ENCODE measurements at regions of chr19 and their contacts with region 1.

Region 1: DNA sequence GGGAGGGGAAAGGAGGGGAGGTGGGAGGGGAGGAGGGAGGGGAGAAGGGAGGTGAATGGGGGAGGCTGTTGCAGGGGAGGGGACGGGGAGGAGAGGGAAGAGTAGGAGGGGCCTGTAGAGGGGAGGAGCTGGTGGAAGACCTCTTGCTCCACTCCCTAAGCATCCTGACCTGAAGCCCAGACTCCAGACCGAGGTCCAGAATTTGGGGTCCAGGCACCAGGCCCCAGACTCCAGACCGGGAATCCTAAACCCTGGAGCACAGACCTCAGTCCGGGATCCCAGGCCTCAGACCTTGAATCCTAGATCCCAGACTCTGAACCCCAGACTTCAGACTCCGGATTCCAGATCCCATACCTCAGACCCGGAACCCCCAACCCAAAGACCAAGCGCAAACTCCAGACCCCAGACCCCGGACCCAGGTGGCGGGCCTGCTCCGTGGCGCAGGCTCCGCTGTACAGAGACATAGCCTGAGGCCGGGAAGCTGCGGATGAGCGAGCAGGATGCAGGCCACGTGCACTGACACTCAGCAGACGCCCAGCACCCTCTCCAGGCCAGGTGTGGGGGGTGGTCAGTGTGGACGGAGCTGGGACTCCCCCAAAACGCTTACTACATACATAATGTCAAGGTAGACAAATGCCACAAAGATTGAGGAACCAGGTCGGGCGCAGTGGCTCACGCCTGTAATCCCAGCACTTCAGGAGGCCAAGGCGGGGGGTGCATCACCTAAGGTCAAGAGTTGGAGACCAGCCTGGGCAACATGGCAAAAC is 710 bp upstream of the BTBD2 start:
- DNase-seq: peak in 8 of 9 experiments; percentile 24 to 82 (median 57)
- ATAC-seq: peak; percentile 50
- H3K4me3 ChIP-seq: no peak overlapping the region
- H3K4me3 Mint-ChIP-seq: peak overlapping the region; percentile 63
- H3K27ac ChIP-seq: no peak overlapping the region
- H3K27ac Mint-ChIP-seq: no peak overlapping the region
- H3K4me1 ChIP-seq: peaks cover 15% of the 10 kb centered on the region
- H3K4me1 Mint-ChIP-seq: peaks cover 27% of the 10 kb centered on the region
- H3K27me3 ChIP-seq: no peaks in the 10 kb centered on the region
- H3K27me3 Mint-ChIP-seq: no peaks in the 10 kb centered on the region
- CTCF ChIP-seq: no peak

Region 2: GRCh38 chr19:1929021-1929742 is 87.0 kb before region 1 on chr19:
- CTCF ChIA-PET with region 1: interaction called, 3 read pairs
- POLR2A ChIA-PET with region 1: no interaction called
- intact Hi-C with region 1: loop called (anchors 5 kb)
- DNase-seq: peak; percentile 66 to 93 (median 81)
- ATAC-seq: peak; percentile 82
- H3K4me3 ChIP-seq: peak overlapping the region; percentile 38 to 44
- H3K4me3 Mint-ChIP-seq: peak overlapping the region; percentile 80
- H3K27ac ChIP-seq: no peak overlapping the region
- H3K27ac Mint-ChIP-seq: no peak overlapping the region
- H3K4me1 ChIP-seq: peaks cover 21% of the 10 kb centered on the region
- H3K4me1 Mint-ChIP-seq: peaks cover 21% of the 10 kb centered on the region
- H3K27me3 ChIP-seq: no peaks in the 10 kb centered on the region
- H3K27me3 Mint-ChIP-seq: no peaks in the 10 kb centered on the region
- CTCF ChIP-seq: peak; percentile 80

Region 3: DNA sequence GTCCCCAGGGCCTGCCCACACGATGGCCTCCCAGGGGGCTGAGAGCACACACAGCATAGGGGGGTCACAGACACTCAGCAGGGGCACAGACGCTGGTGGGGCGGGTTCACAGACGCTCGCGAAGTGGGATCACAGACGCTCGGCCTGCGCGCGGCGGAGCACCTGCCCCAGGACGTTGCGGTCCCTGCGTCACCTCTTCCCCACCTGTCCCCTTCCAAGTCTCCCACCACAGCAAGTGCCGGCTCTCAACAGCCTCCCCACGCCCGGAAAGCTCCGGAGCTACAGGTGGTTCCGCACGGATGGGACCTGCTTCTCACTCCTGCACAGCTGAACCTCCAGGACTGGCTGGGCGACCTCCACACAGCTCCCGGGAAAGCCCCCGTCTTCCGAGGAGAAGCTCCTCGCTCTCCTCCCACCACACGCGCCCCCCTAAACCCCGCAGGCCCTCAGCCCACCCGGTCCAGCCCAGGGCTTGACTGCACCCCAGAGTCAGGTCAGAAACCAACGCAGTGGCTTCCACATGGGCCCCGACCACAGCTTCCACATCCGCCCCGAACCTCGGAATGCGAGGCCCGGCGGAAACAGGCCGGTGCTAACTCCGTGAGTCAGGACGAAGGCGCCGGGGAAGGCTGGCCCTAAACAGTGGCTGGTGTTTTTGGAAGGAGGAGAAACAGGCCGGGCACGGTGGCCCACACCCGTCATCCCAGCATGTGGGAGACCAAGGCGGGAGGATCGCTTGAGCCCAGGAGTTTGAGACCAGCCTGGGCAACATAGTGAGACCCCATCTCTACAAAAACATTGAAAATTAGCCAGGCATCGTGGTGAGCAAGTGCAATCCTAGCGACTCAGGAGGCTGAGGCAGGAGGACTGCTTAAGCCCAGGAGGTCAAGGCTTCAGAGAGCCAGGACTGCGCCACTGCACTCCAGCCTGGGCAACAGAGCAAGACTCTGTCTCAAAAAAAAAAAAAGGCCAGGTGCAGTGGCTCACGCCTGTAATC is 17.2 kb before region 1 on chr19:
- CTCF ChIA-PET with region 1: no interaction called
- POLR2A ChIA-PET with region 1: no interaction called
- intact Hi-C with region 1: no loop called
- DNase-seq: peak in 2 of 9 experiments; percentile 6 to 13
- ATAC-seq: no peak
- H3K4me3 ChIP-seq: no peak overlapping the region
- H3K4me3 Mint-ChIP-seq: peak overlapping the region; percentile 22
- H3K27ac ChIP-seq: no peak overlapping the region
- H3K27ac Mint-ChIP-seq: no peak overlapping the region
- H3K4me1 ChIP-seq: no peaks in the 10 kb centered on the region
- H3K4me1 Mint-ChIP-seq: no peaks in the 10 kb centered on the region
- H3K27me3 ChIP-seq: no peaks in the 10 kb centered on the region
- H3K27me3 Mint-ChIP-seq: no peaks in the 10 kb centered on the region
- CTCF ChIP-seq: no peak

Region 4: GRCh38 chr19:2041683-2042484 is 25.7 kb after region 1 on chr19:
- CTCF ChIA-PET with region 1: interaction called, 4 read pairs
- POLR2A ChIA-PET with region 1: interaction called, 3 read pairs
- intact Hi-C with region 1: loop called (anchors 1 to 2 kb)
- DNase-seq: peak; percentile 99 to 100 (median 100)
- ATAC-seq: peak; percentile 85
- H3K4me3 ChIP-seq: peak overlapping the region; percentile 28 to 62
- H3K4me3 Mint-ChIP-seq: peak overlapping the region; percentile 65
- H3K27ac ChIP-seq: peak overlapping the region; percentile 96 to 100
- H3K27ac Mint-ChIP-seq: peak overlapping the region; percentile 93
- H3K4me1 ChIP-seq: peaks cover 54% of the 10 kb centered on the region
- H3K4me1 Mint-ChIP-seq: peaks cover 28% of the 10 kb centered on the region
- H3K27me3 ChIP-seq: no peaks in the 10 kb centered on the region
- H3K27me3 Mint-ChIP-seq: no peaks in the 10 kb centered on the region
- CTCF ChIP-seq: no peak

Region 5: DNA sequence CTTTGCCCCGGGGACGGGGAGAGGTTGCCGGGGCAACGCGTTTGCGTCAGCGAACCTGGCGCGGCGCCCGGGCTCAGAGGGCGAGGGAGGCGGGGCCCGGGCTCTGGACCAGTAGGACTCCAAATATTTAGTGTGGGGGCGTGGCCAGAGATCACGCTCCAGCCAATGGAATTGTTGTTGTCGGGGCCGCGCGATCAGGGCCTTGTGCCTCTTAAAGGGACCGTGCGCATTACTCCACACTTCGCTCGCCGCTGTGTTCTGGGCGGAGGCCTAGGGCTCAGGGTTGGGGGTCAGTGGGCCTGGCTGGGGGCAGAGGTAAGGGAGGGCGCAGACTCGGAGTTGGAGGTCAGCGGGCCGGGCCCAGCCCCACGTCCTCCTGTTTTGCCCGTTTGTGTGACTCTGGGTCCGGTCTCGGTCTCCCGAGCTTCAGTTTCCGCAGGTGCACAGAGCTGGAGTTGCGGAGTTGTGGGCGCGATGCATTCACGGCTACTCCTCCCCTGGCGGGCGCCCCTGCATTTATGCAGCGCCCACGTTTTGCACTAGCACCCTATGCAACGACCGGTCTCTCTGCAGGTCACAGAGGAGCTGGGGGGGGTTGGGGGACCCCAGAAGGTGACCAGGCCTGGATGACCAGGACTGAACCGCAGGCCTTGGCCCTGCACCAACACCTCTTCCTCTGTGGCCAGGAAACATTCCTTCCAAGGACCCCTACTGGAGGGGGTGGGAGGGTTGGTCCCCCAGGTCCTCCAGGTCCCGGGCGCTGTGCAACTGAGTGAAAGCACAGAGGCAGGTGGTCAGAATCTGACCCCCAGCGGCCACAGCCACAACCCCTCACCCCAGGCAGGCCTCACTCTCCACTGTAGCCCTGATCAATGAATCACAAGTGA is 45.5 kb after region 1 on chr19:
- CTCF ChIA-PET with region 1: interaction called, 4 read pairs
- POLR2A ChIA-PET with region 1: no interaction called
- intact Hi-C with region 1: loop called in 1 of 2 experiments (anchors 1 kb)
- DNase-seq: peak; percentile 99 to 100 (median 99)
- ATAC-seq: peak; percentile 94
- H3K4me3 ChIP-seq: peak overlapping the region; percentile 73 to 80
- H3K4me3 Mint-ChIP-seq: peak overlapping the region; percentile 91
- H3K27ac ChIP-seq: peak overlapping the region; percentile 91 to 96
- H3K27ac Mint-ChIP-seq: peak overlapping the region; percentile 95
- H3K4me1 ChIP-seq: peaks cover 52% of the 10 kb centered on the region
- H3K4me1 Mint-ChIP-seq: peaks cover 44% of the 10 kb centered on the region
- H3K27me3 ChIP-seq: no peaks in the 10 kb centered on the region
- H3K27me3 Mint-ChIP-seq: no peaks in the 10 kb centered on the region
- CTCF ChIP-seq: no peak

Region 6: GRCh38 chr19:2110822-2111221 is 94.6 kb after region 1 on chr19:
- CTCF ChIA-PET with region 1: interaction called, 3 read pairs
- POLR2A ChIA-PET with region 1: no interaction called
- intact Hi-C with region 1: loop called in 1 of 2 experiments (anchors 1 kb)
- DNase-seq: no peak
- ATAC-seq: no peak
- H3K4me3 ChIP-seq: no peak overlapping the region
- H3K4me3 Mint-ChIP-seq: no peak overlapping the region
- H3K27ac ChIP-seq: no peak overlapping the region
- H3K27ac Mint-ChIP-seq: no peak overlapping the region
- H3K4me1 ChIP-seq: no peaks in the 10 kb centered on the region
- H3K4me1 Mint-ChIP-seq: peaks cover 11% of the 10 kb centered on the region
- H3K27me3 ChIP-seq: no peaks in the 10 kb centered on the region
- H3K27me3 Mint-ChIP-seq: no peaks in the 10 kb centered on the region
- CTCF ChIP-seq: no peak